Right lobe of liver (tissue), 6 donors: ENCODE measurements at regions of chr13 and their contacts with region 1.

Region 1: GRCh38 chr13:46721054-46721453 is 75.9 kb downstream of the ESD start:
- DNase-seq: peak in 2 of 3 donors; percentile 28 to 49
- ATAC-seq: peak; percentile 77 to 81 (median 80)
- H3K4me3 ChIP-seq: no peak overlapping the region
- H3K27ac ChIP-seq: no peak overlapping the region
- H3K4me1 ChIP-seq: peaks cover 0 to 17% (median 0%) of the 10 kb centered on the region in 4 donors
- H3K27me3 ChIP-seq: no peaks in the 10 kb centered on the region
- CTCF ChIP-seq: peak; percentile 65 to 83 (median 69)
- POLR2A ChIP-seq: no peak

Region 2: DNA sequence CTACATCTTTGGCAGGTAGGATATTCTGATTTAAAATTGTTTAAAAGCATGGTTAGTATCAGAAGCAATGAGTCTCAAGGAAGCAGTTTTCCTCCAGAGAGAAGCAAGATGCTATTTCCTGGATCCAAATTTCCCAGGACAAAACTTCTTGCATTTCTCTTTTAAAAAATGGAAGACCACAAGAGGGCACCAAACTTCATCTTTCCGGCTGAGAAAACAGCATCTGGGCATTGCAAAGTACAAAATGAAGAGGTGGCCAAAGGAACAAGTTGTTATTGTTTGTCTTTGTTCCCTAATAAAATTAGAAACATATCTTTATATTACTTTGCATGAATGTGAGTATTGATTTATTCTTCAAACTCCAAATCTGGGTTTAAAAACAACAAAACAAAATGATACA is 228.1 kb before region 1 on chr13:
- intact Hi-C with region 1: loop called in 1 of 2 experiments (anchors 10 kb)
- DNase-seq: no peak
- ATAC-seq: peak; percentile 59 to 75 (median 66)
- H3K4me3 ChIP-seq: no peak overlapping the region
- H3K27ac ChIP-seq: no peak overlapping the region
- H3K4me1 ChIP-seq: no peaks in the 10 kb centered on the region
- H3K27me3 ChIP-seq: no peaks in the 10 kb centered on the region
- CTCF ChIP-seq: peak; percentile 56 to 69 (median 60)
- POLR2A ChIP-seq: no peak

Region 3: DNA sequence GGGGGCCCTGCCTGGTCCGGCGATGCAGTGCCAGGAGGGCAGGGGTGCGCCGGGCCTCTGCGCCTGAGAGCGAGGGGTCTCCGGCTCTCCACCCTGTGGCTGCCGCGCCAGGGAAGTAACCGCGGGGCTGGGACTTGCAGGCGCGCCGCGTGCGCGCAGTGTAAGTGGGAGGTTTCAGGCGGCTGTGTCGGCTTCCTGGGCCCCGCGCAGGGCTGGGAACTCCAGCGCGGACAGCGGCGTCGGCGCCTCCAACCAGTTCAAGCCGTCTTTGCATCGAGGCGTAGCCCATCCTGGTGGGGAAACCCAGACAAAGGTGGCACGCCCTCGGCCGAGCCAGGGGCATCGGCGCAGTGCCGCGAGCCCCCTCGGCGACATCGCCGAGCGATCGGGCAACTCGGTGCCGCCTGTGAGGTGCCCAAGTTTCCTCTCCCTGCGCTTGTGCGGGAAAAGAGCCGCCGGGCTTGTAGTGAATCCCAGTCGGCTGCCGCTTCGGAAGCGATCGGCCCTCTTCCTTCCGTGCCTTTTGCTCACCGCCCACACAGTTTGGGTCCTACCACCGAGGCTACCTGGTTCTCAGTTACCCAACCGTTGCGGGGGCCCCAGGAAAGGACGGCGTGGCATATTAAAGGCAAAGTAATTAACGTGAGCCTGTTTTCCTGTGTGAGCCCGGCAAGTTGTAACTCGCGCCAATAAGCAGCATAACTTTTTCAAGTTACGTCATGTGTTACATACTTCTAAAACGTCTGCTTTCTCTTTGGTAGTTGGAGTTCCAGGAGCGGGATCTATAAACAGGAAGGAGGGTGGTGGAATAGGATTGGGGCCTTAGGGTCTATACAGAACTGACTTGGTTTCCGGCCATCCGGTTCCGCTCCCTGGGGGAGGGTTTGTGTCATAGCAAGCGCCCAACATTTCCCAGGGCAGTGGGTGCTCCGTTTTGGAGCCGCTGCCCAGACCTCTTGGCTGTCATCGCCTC is 166.9 kb before region 1 on chr13:
- intact Hi-C with region 1: loop called in 1 of 2 experiments (anchors 5 kb)
- DNase-seq: peak; percentile 70 to 81 (median 71)
- ATAC-seq: peak; percentile 58 to 68 (median 68)
- H3K4me3 ChIP-seq: peak overlapping the region; percentile 73 to 93 (median 79)
- H3K27ac ChIP-seq: peak overlapping the region; percentile 90 to 94 (median 91)
- H3K4me1 ChIP-seq: peaks cover 0 to 18% (median 5%) of the 10 kb centered on the region in 4 donors
- H3K27me3 ChIP-seq: no peaks in the 10 kb centered on the region
- CTCF ChIP-seq: peak; percentile 11 to 34 (median 28)
- POLR2A ChIP-seq: peak; percentile 55

Region 4: DNA sequence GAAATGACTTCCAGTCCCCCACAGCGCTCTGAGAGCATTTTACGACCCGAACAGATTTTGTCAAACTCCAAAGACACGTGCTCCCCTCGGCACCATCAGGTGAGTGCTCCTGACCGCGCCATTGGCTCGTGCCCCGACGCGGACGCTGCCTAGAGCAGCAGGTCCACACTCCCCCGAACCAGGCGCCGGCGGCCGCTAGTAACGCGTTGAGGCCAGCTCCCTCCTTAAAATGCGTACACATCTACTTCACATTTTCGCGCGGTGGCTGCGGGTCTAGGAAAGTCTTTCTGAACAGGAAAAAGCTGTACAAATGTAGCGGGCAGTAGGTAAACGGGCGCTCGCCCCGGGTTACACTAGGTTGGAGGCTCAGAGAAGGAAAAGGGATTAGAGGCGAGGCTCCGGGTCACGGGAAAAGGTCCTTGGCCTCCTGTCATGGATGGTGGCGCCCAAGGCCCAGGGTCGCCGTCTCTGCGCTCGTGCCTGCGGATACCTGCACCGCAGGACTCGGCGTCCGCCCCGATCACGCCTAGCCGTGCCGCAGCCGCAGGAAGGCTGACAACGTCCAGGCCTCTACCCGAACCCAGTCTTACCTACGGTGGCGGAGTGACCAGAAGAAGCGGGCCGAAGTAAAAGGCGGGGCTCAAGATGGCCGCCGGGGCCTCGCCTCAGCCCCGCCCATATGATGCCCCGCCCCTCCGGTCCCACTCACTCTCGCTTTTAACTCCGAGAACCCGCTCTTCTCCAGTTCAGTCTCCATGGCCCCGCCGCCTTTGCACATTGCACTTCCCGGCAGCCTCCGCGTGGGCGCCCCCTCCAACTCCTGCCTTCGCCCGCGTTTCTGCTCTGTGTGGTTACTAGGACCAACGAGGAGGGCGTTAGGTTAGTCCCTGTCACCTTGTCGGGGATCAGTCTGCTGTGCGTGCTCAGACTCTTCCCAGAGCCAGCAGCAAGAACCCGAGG is 75.7 kb after region 1 on chr13 and contains the start of gene ESD:
- intact Hi-C with region 1: no loop called
- DNase-seq: peak; percentile 92 to 97 (median 95)
- ATAC-seq: peak; percentile 91 to 96 (median 92)
- H3K4me3 ChIP-seq: peak within 1 kb of the TSS; percentile 78 to 86 (median 83)
- H3K27ac ChIP-seq: peak within 1 kb of the TSS; percentile 92 to 95 (median 93)
- H3K4me1 ChIP-seq: peaks cover 0 to 44% (median 21%) of the 10 kb centered on the region in 4 donors
- H3K27me3 ChIP-seq: no peaks in the 10 kb centered on the region
- CTCF ChIP-seq: no peak
- POLR2A ChIP-seq: peak; percentile 89
- total RNA-seq, gene ESD: 69.8 to 90.6 (median 85.4) TPM